ENCODE measurements at regions of chr17 and their contacts with region 1.

Region 1: DNA sequence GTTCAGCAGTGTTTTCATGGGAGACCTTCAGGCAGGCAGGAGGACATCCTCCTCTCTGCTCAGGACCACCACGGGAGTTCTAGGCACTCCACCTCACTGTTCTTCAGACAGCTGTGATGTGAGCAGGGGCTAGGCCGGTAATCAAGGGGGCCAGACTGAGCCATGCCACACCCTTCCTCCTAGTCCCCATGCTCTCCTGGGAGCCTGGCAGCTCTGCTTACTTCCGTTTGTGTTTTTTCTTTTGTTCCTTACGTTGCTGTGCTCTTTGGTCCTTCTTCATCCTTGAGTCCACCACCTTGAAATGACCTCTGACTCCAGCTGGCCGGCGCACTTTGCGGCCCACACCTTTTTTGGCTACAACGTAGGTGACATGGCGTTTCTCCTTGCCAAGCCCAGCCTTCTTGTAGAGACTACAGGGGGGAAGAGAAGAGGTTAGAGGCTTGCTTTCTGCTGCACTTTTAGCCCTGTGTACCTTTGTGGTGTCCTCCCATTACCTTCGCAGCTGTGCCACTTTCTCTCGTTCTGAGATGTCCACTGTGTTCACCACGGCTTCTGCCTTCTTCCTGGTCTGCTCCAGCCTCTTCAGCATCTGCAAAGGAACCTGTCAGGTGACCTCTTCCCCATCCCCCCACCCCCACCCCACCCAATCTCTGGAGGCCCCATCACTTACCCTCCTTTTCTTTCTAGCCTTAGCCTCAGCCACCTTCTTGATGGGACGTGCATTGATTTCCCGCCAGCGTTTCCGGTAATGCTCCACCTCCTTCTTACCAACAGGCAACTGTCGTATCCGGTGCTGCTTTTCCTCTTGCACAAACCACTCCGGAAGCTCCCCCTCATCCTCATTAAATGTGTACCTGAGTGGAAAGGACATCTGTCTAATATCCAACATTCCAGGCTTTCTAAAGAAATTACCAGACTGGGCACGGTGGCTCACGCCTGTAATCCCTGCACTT is 7.4 kb upstream of the PSMC5 start:
- DNase-seq: no peak
- H3K4me3 ChIP-seq: no peak overlapping the region
- H3K27ac ChIP-seq: no peak overlapping the region
- H3K4me1 ChIP-seq: no peaks in the 10 kb centered on the region
- H3K27me3 ChIP-seq: no peaks in the 10 kb centered on the region
- CTCF ChIP-seq: no peak
- POLR2A ChIP-seq: no peak

Region 2: GRCh38 chr17:63621766-63622519 is 197.9 kb before region 1 on chr17 and contains the start of gene MAP3K3:
- intact Hi-C with region 1: loop called (anchors 10 kb)
- DNase-seq: peak; percentile 100
- H3K4me3 ChIP-seq: peak within 1 kb of the TSS; percentile 66 to 76
- H3K27ac ChIP-seq: peak within 1 kb of the TSS; percentile 80 to 91
- H3K4me1 ChIP-seq: peaks cover 2% of the 10 kb centered on the region
- H3K27me3 ChIP-seq: no peaks in the 10 kb centered on the region
- CTCF ChIP-seq: no peak
- POLR2A ChIP-seq: peak; percentile 54
- total RNA-seq, gene MAP3K3: 57.5 to 57.7 TPM

Region 3: GRCh38 chr17:64174686-64175456 is 355.0 kb after region 1 on chr17:
- intact Hi-C with region 1: no loop called
- DNase-seq: peak; percentile 37
- H3K4me3 ChIP-seq: no peak overlapping the region
- H3K27ac ChIP-seq: no peak overlapping the region
- H3K4me1 ChIP-seq: peaks cover 14% of the 10 kb centered on the region
- H3K27me3 ChIP-seq: no peaks in the 10 kb centered on the region
- CTCF ChIP-seq: no peak
- POLR2A ChIP-seq: no peak

Measured in testis (tissue), 5 donors.